H1 (cell line): ENCODE measurements at regions of chrX and their contacts with region 1.

Region 1: DNA sequence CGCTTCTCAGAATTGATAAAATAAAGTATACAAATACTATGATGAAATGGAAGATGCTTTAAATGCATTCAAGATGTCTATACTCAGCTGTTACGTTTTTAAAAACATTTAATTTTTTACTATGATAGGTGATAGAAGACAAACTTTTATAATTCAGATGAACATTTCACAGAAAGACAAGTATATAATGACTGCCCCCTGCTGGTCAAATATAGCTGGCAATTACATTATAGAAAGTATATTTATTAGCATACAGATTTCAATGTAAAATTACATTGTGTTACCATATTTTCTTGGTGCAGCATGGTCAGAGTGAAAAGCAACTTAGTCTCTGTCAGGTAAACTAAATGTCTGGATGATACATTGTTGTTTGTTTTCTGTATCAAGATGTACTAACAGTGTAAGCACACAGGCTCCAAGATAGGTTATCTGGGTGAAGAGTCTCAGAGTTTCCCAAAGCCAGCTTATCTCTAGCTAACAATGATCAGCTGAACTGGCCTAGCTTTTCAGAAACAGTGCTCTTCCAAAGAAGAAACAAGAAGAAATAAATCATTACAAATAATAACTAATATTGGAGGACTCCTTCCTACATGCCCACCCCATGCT is 54.1 kb downstream of the SRPX start:
- DNase-seq: no peak
- H3K4me3 ChIP-seq: no peak overlapping the region
- H3K27ac ChIP-seq: no peak overlapping the region
- H3K4me1 ChIP-seq: peaks cover 0 to 3% (median under 1%) of the 10 kb centered on the region in 4 experiments; a peak in 3 of 7 replicates
- H3K27me3 ChIP-seq: no peaks in the 10 kb centered on the region
- CTCF ChIP-seq: peak in 1 of 3 experiments; percentile 23; a peak in 1 of 4 replicates
- EP300 ChIP-seq: no peak
- POLR2A ChIP-seq: no peak
- RAD21 ChIP-seq: peak in 1 of 2 experiments; percentile 42; a peak in 3 of 4 replicates

Region 2: DNA sequence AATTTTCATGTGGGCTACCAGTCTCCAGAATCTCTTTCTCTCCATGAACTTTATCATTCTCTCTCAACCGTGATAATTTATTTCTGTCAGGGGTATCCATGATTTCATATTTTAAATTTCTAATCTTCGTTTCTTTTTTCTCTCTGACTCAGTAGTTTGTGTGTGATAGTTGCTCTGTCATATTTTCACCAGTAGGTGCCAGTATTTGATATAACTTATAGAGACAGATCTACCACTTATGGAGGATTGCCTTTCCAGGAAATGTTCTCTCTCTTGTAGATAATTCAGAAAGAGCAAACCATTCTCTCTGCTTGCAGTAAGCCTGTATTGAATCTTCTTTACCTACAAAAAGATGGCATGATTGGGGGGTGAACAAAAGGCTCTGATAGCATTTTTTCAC is 239.9 kb before region 1 on chrX:
- CTCF ChIA-PET with region 1: interaction called, 12 read pairs
- POLR2A ChIA-PET with region 1: no interaction called
- DNase-seq: no peak
- H3K4me3 ChIP-seq: no peak overlapping the region
- H3K27ac ChIP-seq: no peak overlapping the region
- H3K4me1 ChIP-seq: no peaks in the 10 kb centered on the region; a peak in 1 of 7 replicates
- H3K27me3 ChIP-seq: no peaks in the 10 kb centered on the region
- CTCF ChIP-seq: peak in 2 of 3 experiments; percentile 4 to 32; a peak in 2 of 4 replicates
- EP300 ChIP-seq: no peak
- POLR2A ChIP-seq: no peak
- RAD21 ChIP-seq: peak; percentile 53

Region 3: DNA sequence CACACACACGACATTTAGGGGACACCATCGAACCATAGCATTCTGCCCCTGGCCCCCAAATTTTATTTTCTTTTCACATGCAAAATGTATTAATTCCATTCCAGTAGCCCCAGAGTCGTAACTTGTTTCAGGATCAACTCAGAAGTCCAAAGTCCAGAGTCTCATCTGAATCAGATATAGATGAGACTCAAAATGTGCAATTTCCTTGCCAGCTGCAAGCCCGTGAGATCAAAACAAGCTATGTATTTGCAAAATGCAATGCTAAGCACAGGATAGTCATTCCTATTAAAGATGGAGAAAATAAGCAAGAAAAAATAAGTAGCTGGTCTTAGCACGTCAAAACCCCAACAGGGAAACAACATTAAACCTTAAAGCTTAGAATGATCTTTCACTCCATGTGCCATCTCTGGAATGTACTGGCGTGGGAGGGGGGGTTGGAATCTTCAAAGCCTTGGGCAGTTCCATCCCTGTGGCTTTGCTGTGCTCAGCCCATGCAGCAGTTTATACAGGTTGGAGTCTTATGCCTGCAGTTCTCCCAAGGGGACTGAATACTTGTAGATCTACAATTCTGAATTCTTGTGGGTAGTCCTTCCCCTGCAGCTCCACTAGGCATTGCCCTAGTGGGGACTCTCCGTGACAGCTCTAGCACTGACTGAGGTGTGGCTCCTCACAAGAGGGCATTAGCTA is 207.9 kb before region 1 on chrX:
- CTCF ChIA-PET with region 1: interaction called, 12 read pairs
- POLR2A ChIA-PET with region 1: no interaction called
- DNase-seq: no peak
- H3K4me3 ChIP-seq: no peak overlapping the region
- H3K27ac ChIP-seq: no peak overlapping the region
- H3K4me1 ChIP-seq: no peaks in the 10 kb centered on the region
- H3K27me3 ChIP-seq: no peaks in the 10 kb centered on the region
- CTCF ChIP-seq: no peak
- EP300 ChIP-seq: no peak
- POLR2A ChIP-seq: no peak
- RAD21 ChIP-seq: no peak

Region 4: DNA sequence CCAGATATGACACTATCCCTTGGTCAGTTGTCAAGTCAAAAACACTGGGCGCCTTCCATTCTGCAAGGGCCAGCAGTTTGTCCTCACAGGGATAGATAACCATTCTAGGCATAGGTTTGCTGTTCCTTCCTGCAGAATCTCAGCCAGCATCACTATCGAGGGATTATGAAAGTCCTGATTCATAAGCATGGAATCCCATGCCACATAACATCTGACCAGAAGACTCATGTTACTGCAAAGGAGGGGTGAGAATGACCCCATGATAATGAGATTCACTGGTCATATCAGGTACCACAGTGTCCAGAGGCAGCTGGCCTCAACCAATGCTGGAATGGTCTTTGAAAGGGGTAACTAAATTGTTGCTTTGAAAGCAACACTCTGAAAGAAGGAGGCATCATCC is 270.5 kb after region 1 on chrX:
- CTCF ChIA-PET with region 1: no interaction called
- POLR2A ChIA-PET with region 1: no interaction called
- DNase-seq: no peak
- H3K4me3 ChIP-seq: no peak overlapping the region
- H3K27ac ChIP-seq: no peak overlapping the region
- H3K4me1 ChIP-seq: no peaks in the 10 kb centered on the region
- H3K27me3 ChIP-seq: no peaks in the 10 kb centered on the region
- CTCF ChIP-seq: no peak
- EP300 ChIP-seq: no peak
- POLR2A ChIP-seq: no peak
- RAD21 ChIP-seq: no peak